ENCODE measurements at regions of chr10 and their contacts with region 1.

Region 1: GRCh38 chr10:19911886-19912285 is 95.7 kb downstream of the PLXDC2 start:
- DNase-seq: no peak
- H3K4me3 ChIP-seq: no peak overlapping the region
- H3K27ac ChIP-seq: no peak overlapping the region
- H3K4me1 ChIP-seq: peaks cover 0 to 5% of the 10 kb centered on the region in 2 donors
- H3K27me3 ChIP-seq: no peaks in the 10 kb centered on the region
- CTCF ChIP-seq: no peak
- POLR2A ChIP-seq: no peak

Region 2: GRCh38 chr10:19941206-19941880 is 29.5 kb after region 1 on chr10:
- intact Hi-C with region 1: no loop called
- DNase-seq: no peak
- H3K4me3 ChIP-seq: no peak overlapping the region
- H3K27ac ChIP-seq: no peak overlapping the region
- H3K4me1 ChIP-seq: peaks cover 0 to 5% of the 10 kb centered on the region in 2 donors
- H3K27me3 ChIP-seq: no peaks in the 10 kb centered on the region
- CTCF ChIP-seq: no peak
- POLR2A ChIP-seq: no peak

Region 3: DNA sequence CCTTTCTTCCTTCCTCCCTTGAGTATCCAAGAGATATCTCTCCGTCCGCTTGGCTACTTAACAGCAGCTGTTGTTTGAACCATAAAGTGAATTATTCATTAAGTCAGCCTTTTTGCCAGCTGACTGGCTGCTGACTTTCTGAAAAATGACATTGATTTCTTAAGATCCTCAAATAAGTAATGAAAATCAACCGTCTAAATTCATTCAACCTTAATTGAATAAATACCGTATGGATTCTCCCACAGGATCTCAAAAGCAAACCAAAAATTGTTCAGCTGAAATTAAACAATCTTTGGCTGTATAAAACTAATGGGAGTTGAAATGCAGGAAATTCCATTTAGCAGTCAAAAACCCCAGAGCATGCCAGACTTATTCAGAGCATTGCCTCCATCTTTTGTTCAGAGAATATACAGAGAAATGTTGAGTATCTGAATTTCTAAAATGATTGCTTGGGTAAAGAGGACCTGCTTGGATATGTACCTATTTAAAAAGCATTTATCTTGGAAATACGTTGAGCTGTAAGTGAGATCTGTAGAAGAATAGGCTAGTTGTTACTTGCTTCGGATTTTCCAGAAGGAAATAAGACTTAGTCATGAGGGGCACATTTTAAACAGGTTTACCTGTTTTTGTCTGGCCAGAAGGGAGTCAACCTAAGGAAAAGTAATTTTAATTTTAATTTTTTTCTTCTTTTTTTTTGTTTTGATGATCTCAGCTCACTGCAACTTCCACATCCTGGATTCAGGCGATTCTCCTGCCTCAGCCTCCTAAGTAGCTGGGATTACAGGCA is 40.5 kb after region 1 on chr10:
- intact Hi-C with region 1: loop called (anchors 2 kb)
- DNase-seq: no peak
- H3K4me3 ChIP-seq: no peak overlapping the region
- H3K27ac ChIP-seq: peak overlapping the region in 1 of 2 donors; percentile 35
- H3K4me1 ChIP-seq: no peaks in the 10 kb centered on the region
- H3K27me3 ChIP-seq: no peaks in the 10 kb centered on the region
- CTCF ChIP-seq: no peak
- POLR2A ChIP-seq: no peak

Region 4: GRCh38 chr10:21336476-21337170 is 1424.7 kb after region 1 on chr10:
- intact Hi-C with region 1: no loop called
- DNase-seq: peak in 1 of 2 donors; percentile 81
- H3K4me3 ChIP-seq: peak overlapping the region in 1 of 3 donors; percentile 15
- H3K27ac ChIP-seq: peak overlapping the region; percentile 75 to 79
- H3K4me1 ChIP-seq: no peaks in the 10 kb centered on the region
- H3K27me3 ChIP-seq: no peaks in the 10 kb centered on the region
- CTCF ChIP-seq: no peak
- POLR2A ChIP-seq: no peak

Measured in breast epithelium (tissue), 4 donors.